PC-9 (cell line): ENCODE measurements at regions of chr9 and their contacts with region 1.

Region 1: GRCh38 chr9:115524453-115525059 is 406.6 kb upstream of the TNC start:
- DNase-seq: peak; percentile 30 to 60
- H3K4me3 ChIP-seq: no peak overlapping the region
- H3K27ac ChIP-seq: no peak overlapping the region
- H3K4me1 ChIP-seq: no peaks in the 10 kb centered on the region
- H3K27me3 ChIP-seq: no peaks in the 10 kb centered on the region
- CTCF ChIP-seq: peak; percentile 84

Region 2: DNA sequence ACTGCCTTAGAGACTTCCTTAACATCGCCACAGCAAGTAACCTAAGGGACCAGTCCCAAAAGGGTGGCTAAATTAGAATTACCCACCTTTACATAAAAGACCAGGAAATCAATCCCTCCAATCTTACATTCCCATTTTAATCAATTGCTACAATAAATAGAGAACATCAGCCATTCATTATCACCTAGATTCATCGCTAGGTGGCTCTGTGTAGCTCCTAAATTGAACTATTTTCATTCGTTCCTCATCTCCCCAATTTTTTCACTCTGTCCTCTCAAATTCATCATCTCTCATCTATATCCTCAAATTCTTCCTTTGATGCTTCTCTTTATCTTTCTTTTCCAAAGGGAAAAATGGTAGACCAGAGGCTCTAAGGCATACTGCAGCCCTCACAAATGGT is 298.4 kb before region 1 on chr9:
- CTCF ChIA-PET with region 1: interaction called, 5 read pairs
- POLR2A ChIA-PET with region 1: no interaction called
- intact Hi-C with region 1: loop called (anchors 1 kb)
- DNase-seq: no peak
- H3K4me3 ChIP-seq: no peak overlapping the region
- H3K27ac ChIP-seq: no peak overlapping the region
- H3K4me1 ChIP-seq: no peaks in the 10 kb centered on the region
- H3K27me3 ChIP-seq: no peaks in the 10 kb centered on the region
- CTCF ChIP-seq: peak; percentile 55

Region 3: DNA sequence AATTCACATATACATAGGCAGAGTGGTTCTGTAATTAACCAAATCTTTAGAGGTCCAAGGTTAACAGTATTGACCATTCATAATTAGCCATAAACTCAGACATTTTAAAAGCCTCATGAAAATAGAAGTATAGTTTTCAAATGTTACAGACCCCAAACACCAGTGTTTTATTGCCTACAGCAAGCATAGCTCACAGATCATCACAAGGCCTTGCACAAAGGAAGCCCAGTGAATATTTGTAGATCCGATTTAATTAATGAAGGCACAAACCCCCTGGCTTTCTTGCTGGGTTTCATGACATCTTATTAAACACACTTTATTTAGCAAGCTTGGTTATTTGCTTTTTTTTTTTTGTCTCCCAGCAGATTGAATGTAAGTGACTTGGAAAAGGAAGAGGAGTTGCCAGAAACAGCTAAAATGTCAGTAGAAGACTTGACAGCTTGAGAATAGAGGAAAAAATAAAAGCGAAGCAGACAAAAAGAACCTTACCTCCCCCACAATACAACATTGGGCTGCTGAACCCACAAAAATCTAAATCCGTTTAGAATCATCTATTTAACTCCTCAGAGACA is 122.7 kb before region 1 on chr9:
- CTCF ChIA-PET with region 1: no interaction called
- POLR2A ChIA-PET with region 1: no interaction called
- intact Hi-C with region 1: no loop called
- DNase-seq: no peak
- H3K4me3 ChIP-seq: no peak overlapping the region
- H3K27ac ChIP-seq: no peak overlapping the region
- H3K4me1 ChIP-seq: 0 out of 2 replicates have a peak, but pooled peaks cover under 1% of the 10 kb centered on the region
- H3K27me3 ChIP-seq: no peaks in the 10 kb centered on the region
- CTCF ChIP-seq: no peak

Region 4: DNA sequence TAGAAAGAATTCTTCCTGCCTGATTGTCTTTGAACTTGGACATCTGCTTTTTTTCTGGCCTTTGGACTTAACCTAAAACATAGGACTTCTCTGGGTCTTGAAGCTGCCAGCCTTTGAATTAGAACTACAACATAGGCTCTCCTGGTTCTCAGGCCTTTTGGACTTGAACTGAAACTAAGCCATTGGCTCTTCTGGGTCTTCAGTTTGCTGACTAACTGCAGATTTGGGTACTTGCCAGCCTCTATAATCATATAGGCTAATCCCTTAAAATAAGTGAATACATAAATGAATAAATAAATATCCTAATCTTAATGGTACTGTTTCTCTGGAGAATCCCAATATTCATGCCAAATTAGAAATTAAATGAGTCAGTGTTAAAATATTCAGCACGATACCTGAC is 155.7 kb after region 1 on chr9:
- CTCF ChIA-PET with region 1: no interaction called
- POLR2A ChIA-PET with region 1: no interaction called
- intact Hi-C with region 1: no loop called
- DNase-seq: no peak
- H3K4me3 ChIP-seq: no peak overlapping the region
- H3K27ac ChIP-seq: no peak overlapping the region
- H3K4me1 ChIP-seq: no peaks in the 10 kb centered on the region
- H3K27me3 ChIP-seq: no peaks in the 10 kb centered on the region
- CTCF ChIP-seq: no peak